Heart right ventricle (tissue), 16 donors: ENCODE measurements at regions of chr11 and their contacts with region 1.

Region 1: GRCh38 chr11:107017433-107018227 is 646 bp downstream of the GUCY1A2 start:
- DNase-seq: peak; percentile 28 to 59
- ATAC-seq: peak; percentile 69 to 85 (median 78)
- H3K4me3 ChIP-seq: peak overlapping the region; percentile 1 to 57 (median 50)
- H3K27ac ChIP-seq: peak overlapping the region in 9 of 10 donors; percentile 25 to 85 (median 64)
- H3K4me1 ChIP-seq: peaks cover 0 to 14% (median 5%) of the 10 kb centered on the region in 9 donors
- H3K27me3 ChIP-seq: peaks cover 0 to 67% (median 40%) of the 10 kb centered on the region in 7 donors
- CTCF ChIP-seq: peak; percentile 23 to 65 (median 48)

Region 2: DNA sequence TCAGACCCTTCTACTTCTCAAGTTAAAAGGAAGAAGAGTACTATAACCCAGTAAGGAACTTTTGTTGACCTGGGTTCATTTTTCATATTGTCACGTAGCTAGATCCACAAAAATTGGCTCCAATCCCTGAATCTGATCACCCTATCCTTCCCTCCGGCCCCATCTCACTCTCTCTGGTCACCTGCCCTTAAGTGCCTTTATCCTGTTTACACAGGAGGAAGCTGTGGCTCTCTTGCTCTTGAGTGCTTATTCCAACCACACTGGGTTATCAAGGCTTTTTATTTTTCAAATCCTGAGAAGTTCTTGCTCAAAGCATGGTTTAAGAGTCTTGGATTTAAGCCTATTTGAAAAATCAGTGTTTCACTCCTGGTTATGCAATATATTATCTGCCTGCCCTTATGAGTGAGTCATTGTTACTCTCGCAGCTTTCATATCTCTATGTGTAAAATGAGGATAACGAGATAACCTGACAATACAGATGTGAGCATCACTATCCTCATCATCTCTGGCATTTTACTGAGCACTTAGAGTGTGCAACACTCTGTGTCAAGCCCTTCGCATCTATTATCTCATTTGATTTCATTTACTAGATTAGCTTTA is 293.2 kb before region 1 on chr11:
- intact Hi-C with region 1: loop called in 5 of 10 experiments (anchors 5 to 10 kb)
- DNase-seq: no peak
- ATAC-seq: peak in 1 of 8 donors; percentile 35
- H3K4me3 ChIP-seq: no peak overlapping the region
- H3K27ac ChIP-seq: no peak overlapping the region
- H3K4me1 ChIP-seq: no peaks in the 10 kb centered on the region
- H3K27me3 ChIP-seq: no peaks in the 10 kb centered on the region
- CTCF ChIP-seq: no peak

Region 3: DNA sequence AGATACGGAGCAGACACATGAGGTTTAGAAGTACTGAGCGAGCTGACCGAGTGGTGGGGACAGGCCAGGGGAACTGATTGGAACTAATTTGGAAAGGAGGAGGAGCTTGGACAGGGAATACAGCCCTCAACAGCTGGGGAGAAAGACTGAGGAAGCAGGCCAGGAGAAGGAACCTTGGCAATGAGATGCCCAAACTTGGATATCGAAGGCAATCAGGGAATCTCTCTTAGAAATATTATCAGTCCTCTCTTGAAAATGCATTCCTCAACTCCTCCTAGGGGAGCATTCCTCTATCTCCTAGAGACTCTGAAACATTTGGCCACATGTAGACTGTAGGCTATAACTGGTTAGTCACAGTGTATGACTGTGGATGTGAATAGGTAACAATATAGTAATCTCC is 284.0 kb before region 1 on chr11:
- intact Hi-C with region 1: loop called in 3 of 10 experiments (anchors 10 kb)
- DNase-seq: no peak
- ATAC-seq: peak in 1 of 8 donors; percentile 63
- H3K4me3 ChIP-seq: no peak overlapping the region
- H3K27ac ChIP-seq: no peak overlapping the region
- H3K4me1 ChIP-seq: no peaks in the 10 kb centered on the region
- H3K27me3 ChIP-seq: no peaks in the 10 kb centered on the region
- CTCF ChIP-seq: no peak

Region 4: DNA sequence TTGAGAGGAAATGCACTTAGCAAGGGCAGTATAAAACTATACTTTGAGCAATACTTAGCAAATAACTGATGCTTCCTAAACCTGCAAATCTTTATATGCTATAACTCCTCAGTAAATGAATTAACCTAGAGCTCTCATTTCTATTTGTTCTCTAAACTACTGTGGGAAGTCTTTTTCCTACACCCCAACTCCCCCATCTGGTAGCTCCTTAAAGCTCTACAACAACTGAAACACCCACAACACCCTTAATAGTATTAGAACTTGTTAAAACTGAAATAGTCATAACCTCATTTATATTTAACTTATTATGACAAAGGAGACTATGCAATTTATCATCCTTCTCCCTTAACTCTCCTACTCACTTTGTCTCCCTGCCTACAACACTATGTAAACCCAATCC is 42.8 kb before region 1 on chr11:
- intact Hi-C with region 1: loop called in 1 of 10 experiments (anchors 5 kb)
- DNase-seq: no peak
- ATAC-seq: no peak
- H3K4me3 ChIP-seq: no peak overlapping the region
- H3K27ac ChIP-seq: no peak overlapping the region
- H3K4me1 ChIP-seq: peaks cover 0 to 16% (median 0%) of the 10 kb centered on the region in 9 donors
- H3K27me3 ChIP-seq: no peaks in the 10 kb centered on the region
- CTCF ChIP-seq: no peak

Region 5: DNA sequence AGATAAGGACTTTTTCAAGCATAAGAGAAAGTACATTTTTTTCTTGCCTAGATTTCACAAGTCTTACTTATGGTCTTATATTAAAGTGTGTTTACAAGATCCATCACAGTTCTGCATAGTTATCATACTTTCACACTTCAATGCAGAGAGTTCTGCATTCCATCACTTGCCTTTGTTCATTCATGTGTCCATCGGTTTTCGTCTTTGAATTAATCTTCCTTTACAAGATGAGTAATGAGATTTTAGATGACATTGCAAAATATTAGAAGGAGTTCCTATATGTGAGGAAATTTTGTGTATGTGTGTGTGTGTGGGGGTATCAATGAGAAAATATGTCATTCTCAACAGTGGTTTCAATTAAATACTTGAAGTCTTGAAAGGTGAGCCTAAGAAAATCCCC is 98.7 kb after region 1 on chr11:
- intact Hi-C with region 1: no loop called
- DNase-seq: no peak
- ATAC-seq: no peak
- H3K4me3 ChIP-seq: no peak overlapping the region
- H3K27ac ChIP-seq: no peak overlapping the region
- H3K4me1 ChIP-seq: no peaks in the 10 kb centered on the region
- H3K27me3 ChIP-seq: no peaks in the 10 kb centered on the region
- CTCF ChIP-seq: no peak